Pancreas (tissue), 10 donors: ENCODE measurements at regions of chr5 and their contacts with region 1.

Region 1: GRCh38 chr5:154179846-154180710 is 10.5 kb upstream of the GALNT10 start:
- DNase-seq: peak in 1 of 6 donors; percentile 49
- ATAC-seq: peak; percentile 76 to 94 (median 92)
- H3K4me3 ChIP-seq: no peak overlapping the region
- H3K27ac ChIP-seq: no peak overlapping the region
- H3K4me1 ChIP-seq: no peaks in the 10 kb centered on the region
- H3K27me3 ChIP-seq: no peaks in the 10 kb centered on the region
- CTCF ChIP-seq: peak; percentile 57 to 71 (median 64)

Region 2: DNA sequence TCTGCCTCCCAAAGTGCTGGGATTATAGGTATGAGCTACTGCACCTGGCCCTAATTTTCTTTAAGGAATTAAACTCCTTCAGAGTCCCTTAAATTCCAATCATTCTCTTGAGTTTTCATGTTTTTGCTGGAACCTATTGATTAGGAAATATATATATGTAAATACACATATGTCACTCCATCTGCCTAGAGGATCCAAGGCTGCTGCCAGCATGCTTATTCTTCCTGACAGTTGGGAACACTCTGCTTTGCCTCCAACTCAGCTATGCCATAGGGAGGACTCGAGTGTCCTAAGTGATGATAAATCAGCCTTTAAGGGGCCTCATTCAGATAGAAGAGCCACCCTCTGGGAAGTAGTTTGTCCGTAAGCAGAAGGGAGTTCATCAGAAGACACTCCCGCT is 119.5 kb before region 1 on chr5:
- intact Hi-C with region 1: loop called in 1 of 3 experiments (anchors 10 kb)
- DNase-seq: no peak
- ATAC-seq: no peak
- H3K4me3 ChIP-seq: no peak overlapping the region
- H3K27ac ChIP-seq: no peak overlapping the region
- H3K4me1 ChIP-seq: peaks cover 0 to 12% (median 7%) of the 10 kb centered on the region in 3 donors
- H3K27me3 ChIP-seq: no peaks in the 10 kb centered on the region
- CTCF ChIP-seq: no peak

Region 3: GRCh38 chr5:154072414-154073171 is 107.5 kb before region 1 on chr5:
- intact Hi-C with region 1: loop called (anchors 5 to 10 kb)
- DNase-seq: peak; percentile 48 to 95 (median 83)
- ATAC-seq: peak; percentile 88 to 100 (median 98)
- H3K4me3 ChIP-seq: no peak overlapping the region
- H3K27ac ChIP-seq: no peak overlapping the region
- H3K4me1 ChIP-seq: peaks cover 0 to 5% (median 0%) of the 10 kb centered on the region in 3 donors
- H3K27me3 ChIP-seq: no peaks in the 10 kb centered on the region
- CTCF ChIP-seq: peak; percentile 87 to 92 (median 90)